ENCODE measurements at regions of chrX and their contacts with region 1.

Region 1: DNA sequence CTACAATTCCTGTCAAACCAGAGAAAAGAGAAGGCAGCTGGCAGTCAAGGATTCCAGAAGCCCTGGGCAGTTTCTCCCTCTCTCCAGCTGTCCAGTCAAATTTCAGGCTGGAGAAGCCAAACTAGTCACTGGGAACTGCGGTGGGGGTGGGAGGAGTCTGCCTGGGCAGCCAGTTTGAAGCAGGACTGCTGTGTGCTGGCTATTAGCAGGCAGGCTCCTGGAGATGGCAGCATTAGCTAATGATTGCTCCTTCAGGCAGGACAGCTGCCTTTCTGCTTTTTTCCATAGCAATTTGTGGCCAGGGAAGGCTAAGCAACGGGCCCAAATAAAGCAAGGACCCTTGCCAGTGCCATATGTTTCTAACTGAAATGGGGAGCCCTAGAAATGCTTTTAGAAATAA is 44.7 kb upstream of the FGF13 start:
- DNase-seq: peak; percentile 73
- ATAC-seq: peak; percentile 93
- H3K4me3 ChIP-seq: no peak overlapping the region
- H3K27ac ChIP-seq: no peak overlapping the region
- H3K4me1 ChIP-seq: no peaks in the 10 kb centered on the region
- H3K27me3 ChIP-seq: no peaks in the 10 kb centered on the region
- CTCF ChIP-seq: peak; percentile 63

Region 2: GRCh38 chrX:138877746-138878145 is 121.5 kb after region 1 on chrX:
- CTCF ChIA-PET with region 1: no interaction called
- POLR2A ChIA-PET with region 1: no interaction called
- intact Hi-C with region 1: no loop called
- DNase-seq: peak; percentile 92
- ATAC-seq: peak; percentile 91
- H3K4me3 ChIP-seq: 0 out of 2 replicates have a peak overlapping the region, but pooled peaks have one; percentile 30
- H3K27ac ChIP-seq: peak overlapping the region; percentile 86
- H3K4me1 ChIP-seq: peaks cover 13% of the 10 kb centered on the region
- H3K27me3 ChIP-seq: no peaks in the 10 kb centered on the region
- CTCF ChIP-seq: no peak

Region 3: DNA sequence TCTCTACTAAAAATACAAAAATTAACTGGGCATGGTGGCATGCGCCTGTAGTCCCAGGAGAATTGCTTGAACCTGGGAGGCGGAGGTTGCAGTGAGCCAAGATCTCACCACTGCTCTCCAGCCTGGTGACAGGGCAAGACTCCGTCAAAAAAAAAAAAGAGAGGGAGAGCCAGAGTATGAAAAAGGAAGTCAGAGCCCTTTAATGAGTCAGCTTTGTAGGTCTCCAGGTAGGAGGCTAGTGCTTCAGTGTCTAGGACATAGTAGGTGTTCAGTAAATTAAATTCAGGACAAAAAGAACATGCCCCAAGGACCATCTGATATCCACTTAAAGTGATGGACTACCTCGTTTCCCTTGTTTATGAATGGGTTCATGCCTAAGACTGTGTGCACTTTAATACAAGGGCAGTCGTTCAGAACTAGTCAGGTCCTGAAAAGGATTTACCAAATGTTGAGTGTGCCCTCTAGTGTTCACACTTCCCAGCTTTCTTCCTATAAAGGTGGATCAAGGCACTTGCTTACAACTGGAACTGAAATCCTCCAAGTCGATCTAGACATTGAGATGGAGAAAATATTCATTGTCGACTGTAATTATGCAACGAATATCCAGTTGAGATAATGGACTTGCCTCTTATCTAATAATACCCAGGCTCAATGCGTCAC is 803.3 kb after region 1 on chrX:
- CTCF ChIA-PET with region 1: no interaction called
- POLR2A ChIA-PET with region 1: no interaction called
- intact Hi-C with region 1: loop called (anchors 5 kb)
- DNase-seq: peak; percentile 78
- ATAC-seq: peak; percentile 81
- H3K4me3 ChIP-seq: no peak overlapping the region
- H3K27ac ChIP-seq: no peak overlapping the region
- H3K4me1 ChIP-seq: no peaks in the 10 kb centered on the region
- H3K27me3 ChIP-seq: peaks cover 10% of the 10 kb centered on the region
- CTCF ChIP-seq: peak; percentile 74

Measured in PC-3 (cell line).